CD8-positive, alpha-beta T cell (primary cell): ENCODE measurements at regions of chrX and their contacts with region 1.

Region 1: DNA sequence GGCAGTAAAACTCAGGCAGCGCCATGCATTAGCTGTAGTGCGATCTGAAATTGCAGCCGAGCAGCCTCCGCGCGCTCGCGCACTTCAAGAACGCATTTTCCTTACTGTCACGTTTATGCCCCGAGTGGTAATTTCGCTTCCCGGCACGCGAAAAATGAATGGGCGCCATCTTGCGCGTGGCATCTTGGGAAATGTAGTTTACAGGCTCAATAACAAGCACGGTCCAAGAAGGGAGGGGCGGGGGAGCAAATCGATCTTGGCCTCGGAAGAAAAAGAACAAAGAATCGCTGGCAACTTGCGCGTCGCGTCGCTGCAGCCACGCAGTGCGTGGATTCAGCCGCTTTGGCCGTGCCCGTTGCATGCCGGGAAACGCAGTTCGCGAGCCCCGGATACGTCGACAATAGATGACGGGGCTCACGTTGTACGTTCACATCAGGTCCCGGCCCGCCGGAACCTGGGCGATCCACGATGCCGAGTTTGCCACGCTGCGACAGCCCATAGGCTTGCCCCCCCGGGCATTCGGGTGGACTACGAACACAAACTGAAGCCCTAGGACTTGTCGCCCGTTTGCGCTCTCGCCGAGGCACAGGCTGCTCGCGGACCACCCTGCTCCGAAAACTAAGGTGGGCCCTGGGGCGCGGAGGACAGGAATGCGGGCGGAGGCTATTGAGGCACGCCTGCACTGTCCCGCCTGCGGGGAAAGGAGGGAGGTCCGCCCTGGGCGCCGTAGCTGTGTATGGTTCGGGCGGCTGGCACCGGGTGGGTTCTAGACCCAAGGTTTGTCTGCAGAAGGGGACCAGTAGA is at the start of gene FTSJ1:
- DNase-seq: peak; percentile 75 to 96 (median 87)
- ATAC-seq: peak; percentile 89
- H3K4me3 ChIP-seq: peak within 1 kb of the TSS; percentile 62 to 86
- H3K4me3 Mint-ChIP-seq: peak within 1 kb of the TSS; percentile 88
- H3K27ac ChIP-seq: peak within 1 kb of the TSS; percentile 85 to 88
- H3K27ac Mint-ChIP-seq: peak within 1 kb of the TSS; percentile 90
- H3K4me1 ChIP-seq: peaks cover 14% of the 10 kb centered on the region
- H3K4me1 Mint-ChIP-seq: peaks cover 30% of the 10 kb centered on the region
- H3K27me3 ChIP-seq: no peaks in the 10 kb centered on the region
- H3K27me3 Mint-ChIP-seq: no peaks in the 10 kb centered on the region
- CTCF ChIP-seq: no peak
- total RNA-seq, gene FTSJ1: 61.4 to 67.4 TPM

Region 2: DNA sequence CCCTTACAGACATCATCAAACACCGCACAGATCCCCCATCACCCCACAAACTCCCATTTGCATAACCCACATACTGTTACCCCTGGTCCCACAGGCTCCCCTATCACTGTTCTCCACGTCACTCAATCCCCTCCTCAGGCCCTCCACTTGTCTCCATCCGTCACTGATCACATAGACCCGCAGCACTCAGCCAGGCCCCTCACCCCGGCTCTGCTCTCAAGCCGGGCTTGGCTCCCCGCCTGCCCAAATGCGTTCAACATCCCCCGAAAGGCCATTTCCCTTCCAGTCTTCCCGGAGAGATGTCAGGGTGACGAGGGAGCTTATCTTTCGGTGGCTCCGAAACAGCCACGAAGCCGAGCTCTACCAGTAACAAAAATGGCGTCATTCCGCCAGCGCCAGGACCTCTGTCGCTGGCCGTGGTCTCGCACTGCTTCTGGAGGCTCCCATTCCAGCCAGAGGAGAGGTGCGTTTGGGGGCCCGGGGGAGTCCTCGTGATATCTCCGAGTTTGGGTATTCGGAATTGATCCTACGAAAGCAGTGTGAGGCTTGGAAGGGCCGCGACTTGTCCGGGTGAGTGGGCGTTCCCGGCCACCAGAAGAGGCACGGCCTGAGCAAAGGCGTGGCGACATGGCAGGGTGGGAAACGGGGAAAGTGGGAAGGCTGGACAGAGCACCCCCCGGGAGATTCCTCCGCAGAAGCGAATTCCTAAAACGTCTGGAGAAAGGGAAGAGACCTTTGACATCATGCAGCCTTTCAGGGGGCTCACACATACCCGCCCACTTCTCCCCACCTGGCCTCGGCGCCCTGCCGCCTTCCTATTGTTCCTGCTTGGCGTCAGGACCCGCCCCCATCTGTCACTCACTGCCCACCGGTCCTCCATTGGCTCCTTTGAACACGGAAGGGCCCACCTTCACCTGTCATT is 404.7 kb before region 1 on chrX and contains the start of gene ZNF630:
- CTCF ChIA-PET with region 1: no interaction called
- POLR2A ChIA-PET with region 1: no interaction called
- intact Hi-C with region 1: loop called in 1 of 2 experiments (anchors 1 kb)
- DNase-seq: peak; percentile 21 to 78 (median 62)
- ATAC-seq: peak; percentile 85
- H3K4me3 ChIP-seq: peak within 1 kb of the TSS; percentile 84 to 90
- H3K4me3 Mint-ChIP-seq: peak within 1 kb of the TSS; percentile 93
- H3K27ac ChIP-seq: peak within 1 kb of the TSS; percentile 77 to 78
- H3K27ac Mint-ChIP-seq: peak within 1 kb of the TSS; percentile 96
- H3K4me1 ChIP-seq: no peaks in the 10 kb centered on the region
- H3K4me1 Mint-ChIP-seq: peaks cover 20% of the 10 kb centered on the region
- H3K27me3 ChIP-seq: no peaks in the 10 kb centered on the region
- H3K27me3 Mint-ChIP-seq: no peaks in the 10 kb centered on the region
- CTCF ChIP-seq: no peak
- total RNA-seq, gene ZNF630: 1.1 to 1.4 TPM

Region 3: DNA sequence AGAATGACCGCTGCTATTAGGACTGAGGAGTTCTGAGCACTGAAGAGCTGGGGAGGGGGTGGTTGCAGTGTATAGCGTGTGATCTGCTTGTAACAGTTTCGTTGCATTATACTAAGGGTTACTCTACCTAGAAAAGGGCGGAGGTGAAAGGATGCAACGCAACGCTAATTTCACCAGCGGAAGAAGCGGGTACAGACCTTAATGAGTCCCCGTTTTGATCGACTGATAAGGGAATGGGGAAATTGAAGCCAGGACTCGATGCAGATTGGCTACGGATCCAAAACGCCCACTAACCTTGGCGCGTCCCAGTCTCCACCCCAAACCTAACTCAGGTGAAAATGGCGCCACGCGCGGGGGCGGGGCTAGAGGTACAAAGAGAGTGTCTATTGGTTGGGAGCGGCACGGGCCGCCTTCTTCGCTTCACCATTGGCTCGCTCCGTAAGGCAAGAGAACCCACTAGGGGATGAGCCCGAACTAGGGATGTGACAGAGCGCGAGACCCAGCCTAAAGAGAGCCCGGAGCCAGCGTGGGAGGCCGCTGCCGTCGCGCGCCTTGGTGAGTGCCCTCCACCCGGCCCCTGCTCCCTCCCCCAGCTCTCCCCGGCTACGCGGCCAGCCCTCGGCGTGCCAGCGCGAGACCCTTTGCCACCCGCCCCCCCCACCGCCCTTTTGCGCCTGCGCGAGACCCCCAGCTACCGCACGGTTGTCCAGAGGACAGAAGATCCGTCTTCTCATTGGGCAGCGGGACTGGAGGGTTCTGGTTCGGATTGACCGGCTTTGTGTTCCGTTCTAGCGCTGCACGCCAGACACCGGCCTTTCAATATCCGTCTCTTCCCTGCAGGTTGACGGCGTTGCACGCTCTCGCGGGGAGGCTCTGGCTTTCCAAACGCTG is 45.6 kb after region 1 on chrX and contains the start of gene EBP:
- CTCF ChIA-PET with region 1: no interaction called
- POLR2A ChIA-PET with region 1: no interaction called
- intact Hi-C with region 1: loop called (anchors 1 kb)
- DNase-seq: peak; percentile 85 to 96 (median 92)
- ATAC-seq: peak; percentile 96
- H3K4me3 ChIP-seq: peak within 1 kb of the TSS; percentile 72 to 83
- H3K4me3 Mint-ChIP-seq: peak within 1 kb of the TSS; percentile 87
- H3K27ac ChIP-seq: peak within 1 kb of the TSS; percentile 80 to 90
- H3K27ac Mint-ChIP-seq: peak within 1 kb of the TSS; percentile 95
- H3K4me1 ChIP-seq: peaks cover 19% of the 10 kb centered on the region
- H3K4me1 Mint-ChIP-seq: peaks cover 38% of the 10 kb centered on the region
- H3K27me3 ChIP-seq: no peaks in the 10 kb centered on the region
- H3K27me3 Mint-ChIP-seq: no peaks in the 10 kb centered on the region
- CTCF ChIP-seq: no peak
- total RNA-seq, gene EBP: 55.2 to 56.9 TPM

Region 4: GRCh38 chrX:48574270-48575266 is 98.6 kb after region 1 on chrX and contains the start of gene RBM3:
- CTCF ChIA-PET with region 1: no interaction called
- POLR2A ChIA-PET with region 1: interaction called, 3 read pairs
- intact Hi-C with region 1: loop called (anchors 1 to 2 kb)
- DNase-seq: peak; percentile 80 to 97 (median 91)
- ATAC-seq: peak; percentile 91
- H3K4me3 ChIP-seq: peak within 1 kb of the TSS; percentile 70 to 97
- H3K4me3 Mint-ChIP-seq: peak within 1 kb of the TSS; percentile 97
- H3K27ac ChIP-seq: peak within 1 kb of the TSS; percentile 100
- H3K27ac Mint-ChIP-seq: peak within 1 kb of the TSS; percentile 99
- H3K4me1 ChIP-seq: peaks cover 24% of the 10 kb centered on the region
- H3K4me1 Mint-ChIP-seq: peaks cover 25% of the 10 kb centered on the region
- H3K27me3 ChIP-seq: no peaks in the 10 kb centered on the region
- H3K27me3 Mint-ChIP-seq: no peaks in the 10 kb centered on the region
- CTCF ChIP-seq: peak; percentile 21
- total RNA-seq, gene RBM3: 442 to 444 TPM

Region 5: DNA sequence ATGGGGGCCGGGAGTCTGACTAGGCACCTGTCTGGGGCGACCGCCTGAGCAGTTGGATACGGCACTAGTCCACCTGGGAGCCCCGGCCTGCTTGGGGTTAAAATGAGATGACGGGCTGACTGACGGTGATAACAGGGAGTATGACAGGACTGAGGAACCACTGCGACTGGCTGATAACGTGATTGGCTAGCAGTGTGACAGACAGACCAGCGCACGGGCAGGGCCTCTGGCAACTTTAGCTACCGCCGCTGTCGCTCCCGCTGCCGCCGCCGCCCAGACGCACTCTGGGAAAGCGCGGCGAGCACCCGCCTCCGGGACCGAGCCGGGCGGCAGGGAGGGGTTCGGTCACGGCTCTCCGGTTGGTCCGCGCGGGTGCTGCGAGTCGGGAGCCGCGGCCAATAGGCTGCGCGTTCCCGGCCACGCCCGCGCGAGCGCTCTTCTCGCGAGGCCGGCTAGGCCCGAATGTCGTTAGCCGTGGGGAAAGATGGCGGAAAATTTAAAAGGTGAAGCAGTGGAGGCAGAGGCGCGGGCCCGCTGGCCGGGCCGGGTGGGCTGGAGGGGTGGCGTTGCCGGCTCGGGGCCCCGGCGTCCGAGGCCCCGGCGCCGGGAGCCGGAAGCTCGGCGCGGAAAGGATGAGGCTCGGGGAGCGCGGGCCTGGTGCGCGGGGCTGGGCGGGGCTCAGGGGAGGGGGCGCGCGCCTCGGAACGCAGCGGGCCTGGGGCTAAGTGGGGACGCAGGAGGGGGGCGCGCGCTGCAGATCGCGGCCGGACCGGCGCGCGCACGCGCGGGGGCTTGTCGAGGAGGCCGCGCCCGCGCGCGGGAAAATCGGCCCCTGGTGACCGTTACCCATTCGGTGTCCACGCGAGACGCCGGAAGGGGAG is 220.6 kb after region 1 on chrX and contains the start of gene SUV39H1:
- CTCF ChIA-PET with region 1: no interaction called
- POLR2A ChIA-PET with region 1: no interaction called
- intact Hi-C with region 1: loop called in 1 of 2 experiments (anchors 10 kb)
- DNase-seq: peak; percentile 67 to 94 (median 79)
- ATAC-seq: peak; percentile 93
- H3K4me3 ChIP-seq: peak within 1 kb of the TSS; percentile 63 to 72
- H3K4me3 Mint-ChIP-seq: peak within 1 kb of the TSS; percentile 89
- H3K27ac ChIP-seq: peak within 1 kb of the TSS; percentile 85 to 87
- H3K27ac Mint-ChIP-seq: peak within 1 kb of the TSS; percentile 98
- H3K4me1 ChIP-seq: peaks cover 15% of the 10 kb centered on the region
- H3K4me1 Mint-ChIP-seq: peaks cover 27% of the 10 kb centered on the region
- H3K27me3 ChIP-seq: no peaks in the 10 kb centered on the region
- H3K27me3 Mint-ChIP-seq: no peaks in the 10 kb centered on the region
- CTCF ChIP-seq: no peak
- total RNA-seq, gene SUV39H1: 8.2 to 8.6 TPM